Endothelial cell of umbilical vein (primary cell): ENCODE measurements at regions of chr17 and their contacts with region 1.

Region 1: GRCh38 chr17:59619293-59620063 is at the start of gene CLTC:
- DNase-seq: peak; percentile 97
- H3K4me3 ChIP-seq: peak within 1 kb of the TSS; percentile 88 to 94 (median 93)
- H3K27ac ChIP-seq: peak within 1 kb of the TSS; percentile 91
- H3K4me1 ChIP-seq: peaks cover 42% of the 10 kb centered on the region
- H3K27me3 ChIP-seq: no peaks in the 10 kb centered on the region
- CTCF ChIP-seq: no peak
- POLR2A ChIP-seq: peak; percentile 81
- total RNA-seq, gene CLTC: 317 and 326 TPM in 2 replicates

Region 2: DNA sequence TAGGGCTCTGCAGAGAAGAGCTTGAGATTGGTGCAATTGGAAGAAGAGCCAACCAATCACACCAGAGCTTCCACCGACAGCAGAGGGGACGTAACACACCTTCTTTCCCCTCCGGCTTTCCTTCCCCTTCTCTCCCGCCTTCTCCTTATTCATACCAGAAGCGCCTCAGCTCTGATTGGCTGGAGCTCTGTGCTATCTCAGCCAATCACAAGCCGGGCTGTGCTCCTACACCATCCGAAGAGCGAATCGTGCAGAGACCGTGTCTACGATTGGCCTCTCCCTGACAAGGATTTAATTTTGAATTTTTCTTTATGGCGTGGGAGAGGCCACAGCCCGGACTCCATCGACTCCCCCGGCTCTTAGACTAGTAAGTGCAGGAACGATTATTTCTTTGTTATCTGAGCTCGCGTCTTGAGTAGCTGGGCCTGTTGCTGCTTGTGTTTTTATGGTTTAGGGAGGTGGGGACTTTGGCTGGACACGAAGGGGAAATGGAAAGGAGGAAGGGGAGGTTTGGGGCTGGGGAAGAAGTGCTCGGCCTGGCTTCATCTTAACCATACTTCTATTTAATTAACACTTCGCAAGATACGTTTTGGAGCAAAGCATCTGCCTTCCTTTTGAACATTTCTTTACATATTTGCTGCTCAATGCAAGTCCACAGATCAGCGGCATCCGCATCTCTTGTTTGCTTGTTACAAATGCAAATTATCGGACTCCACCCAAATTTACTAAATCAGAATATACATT is 463.9 kb before region 1 on chr17 and contains the start of gene PRR11:
- CTCF ChIA-PET with region 1: no interaction called
- POLR2A ChIA-PET with region 1: interaction called, 3 read pairs
- dilution Hi-C with region 1: no loop called
- intact Hi-C with region 1: loop called (anchors 10 kb)
- DNase-seq: peak; percentile 100
- H3K4me3 ChIP-seq: peak within 1 kb of the TSS; percentile 67 to 97 (median 93)
- H3K27ac ChIP-seq: peak within 1 kb of the TSS; percentile 79
- H3K4me1 ChIP-seq: peaks cover 51% of the 10 kb centered on the region
- H3K27me3 ChIP-seq: no peaks in the 10 kb centered on the region
- CTCF ChIP-seq: no peak
- POLR2A ChIP-seq: no peak
- total RNA-seq, gene PRR11: 82.1 and 86.3 TPM in 2 replicates

Region 3: GRCh38 chr17:59311130-59311920 is 308.2 kb before region 1 on chr17:
- CTCF ChIA-PET with region 1: interaction called, 4 read pairs
- POLR2A ChIA-PET with region 1: no interaction called
- dilution Hi-C with region 1: no loop called
- intact Hi-C with region 1: loop called (anchors 5 kb)
- DNase-seq: peak; percentile 79
- H3K4me3 ChIP-seq: no peak overlapping the region
- H3K27ac ChIP-seq: no peak overlapping the region
- H3K4me1 ChIP-seq: no peaks in the 10 kb centered on the region
- H3K27me3 ChIP-seq: no peaks in the 10 kb centered on the region
- CTCF ChIP-seq: peak; percentile 64 to 67
- POLR2A ChIP-seq: no peak

Region 4: DNA sequence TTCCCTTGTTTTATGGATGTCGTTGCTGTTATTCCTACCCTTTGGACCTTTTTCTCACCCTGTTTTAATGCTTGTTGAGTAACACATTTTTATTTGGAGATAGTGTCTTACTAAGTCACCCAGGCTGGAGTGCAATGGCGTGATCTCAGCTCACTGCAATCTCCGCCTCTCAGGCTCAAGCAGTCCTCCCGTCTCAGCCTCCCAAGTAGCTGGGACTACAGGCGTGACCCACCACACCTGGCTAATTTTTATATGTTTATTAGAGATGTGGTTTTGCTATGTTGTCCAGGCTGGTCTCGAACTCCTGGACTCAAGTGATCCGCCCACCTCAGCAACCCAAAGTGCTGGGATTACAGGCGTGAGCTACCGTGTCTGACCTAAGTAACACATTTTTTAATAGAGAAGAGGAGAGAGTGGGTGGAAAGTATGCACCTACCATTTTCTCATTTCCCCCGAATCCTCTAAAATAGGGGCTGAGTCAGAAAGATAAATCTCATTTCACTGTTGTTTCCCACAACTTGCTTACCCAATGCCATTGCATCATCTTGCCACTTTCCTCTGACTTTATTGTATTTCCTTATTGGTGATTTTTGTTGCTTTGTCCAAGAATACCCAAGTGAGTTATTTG is 47.1 kb before region 1 on chr17:
- CTCF ChIA-PET with region 1: no interaction called
- POLR2A ChIA-PET with region 1: no interaction called
- dilution Hi-C with region 1: no loop called
- intact Hi-C with region 1: no loop called
- DNase-seq: no peak
- H3K4me3 ChIP-seq: no peak overlapping the region
- H3K27ac ChIP-seq: no peak overlapping the region
- H3K4me1 ChIP-seq: no peaks in the 10 kb centered on the region
- H3K27me3 ChIP-seq: no peaks in the 10 kb centered on the region
- CTCF ChIP-seq: no peak
- POLR2A ChIP-seq: no peak

Region 5: GRCh38 chr17:59634632-59635541 is 15.4 kb after region 1 on chr17:
- CTCF ChIA-PET with region 1: no interaction called
- POLR2A ChIA-PET with region 1: interaction called, 6 read pairs
- dilution Hi-C with region 1: no loop called
- intact Hi-C with region 1: loop called (anchors 2 kb)
- DNase-seq: peak; percentile 53
- H3K4me3 ChIP-seq: no peak overlapping the region
- H3K27ac ChIP-seq: no peak overlapping the region
- H3K4me1 ChIP-seq: peaks cover 18% of the 10 kb centered on the region
- H3K27me3 ChIP-seq: no peaks in the 10 kb centered on the region
- CTCF ChIP-seq: no peak
- POLR2A ChIP-seq: no peak

Region 6: GRCh38 chr17:59668816-59669215 is 49.3 kb after region 1 on chr17:
- CTCF ChIA-PET with region 1: interaction called, 3 read pairs
- POLR2A ChIA-PET with region 1: interaction called, 8 read pairs
- dilution Hi-C with region 1: no loop called
- intact Hi-C with region 1: loop called (anchors 1 kb)
- DNase-seq: peak; percentile 94
- H3K4me3 ChIP-seq: peak overlapping the region in 2 of 3 experiments; percentile 36 to 58
- H3K27ac ChIP-seq: peak overlapping the region; percentile 96
- H3K4me1 ChIP-seq: peaks cover 55% of the 10 kb centered on the region
- H3K27me3 ChIP-seq: no peaks in the 10 kb centered on the region
- CTCF ChIP-seq: no peak
- POLR2A ChIP-seq: no peak

Region 7: DNA sequence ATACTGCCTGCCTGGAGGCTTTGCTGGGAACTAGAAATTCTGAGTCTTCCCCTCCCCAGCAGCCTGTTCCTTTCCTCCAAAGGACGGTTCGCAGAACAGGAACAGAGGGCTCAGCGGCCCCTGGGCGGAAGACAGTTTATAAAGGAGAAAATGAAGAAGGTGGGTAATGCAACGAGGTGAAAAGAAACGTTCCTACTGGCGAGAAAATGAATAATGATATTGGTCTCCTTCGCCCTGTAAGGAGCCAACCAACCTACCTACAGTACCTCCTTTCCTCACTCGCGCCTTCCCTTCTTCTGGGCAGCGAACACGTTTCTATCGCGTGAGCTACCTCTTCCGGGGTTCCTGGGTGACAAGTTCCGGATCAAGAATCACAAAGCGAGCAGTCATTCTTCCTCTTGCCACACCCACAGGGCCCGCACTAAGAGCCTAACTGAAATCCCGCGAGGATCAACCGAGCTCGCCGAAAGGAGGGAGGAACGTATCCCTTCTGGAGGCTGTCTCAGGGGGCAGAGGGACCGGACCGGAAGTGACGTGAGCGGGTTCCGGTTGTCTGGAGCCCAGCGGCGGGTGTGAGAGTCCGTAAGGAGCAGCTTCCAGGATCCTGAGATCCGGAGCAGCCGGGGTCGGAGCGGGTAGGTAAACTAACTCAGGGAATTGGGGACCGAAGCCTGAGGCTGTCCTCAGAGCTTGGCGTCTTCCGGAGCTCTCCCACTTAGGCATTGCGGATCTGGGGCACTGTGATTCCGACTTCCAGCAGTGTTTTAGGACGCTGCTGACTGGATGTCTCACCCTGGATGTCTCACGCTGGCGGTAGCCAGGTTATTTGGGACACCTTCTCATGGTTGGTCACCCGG is 87.9 kb after region 1 on chr17 and contains the starts of genes PTRH2 and VMP1:
- CTCF ChIA-PET with region 1: no interaction called
- POLR2A ChIA-PET with region 1: interaction called, 4 read pairs
- dilution Hi-C with region 1: no loop called
- intact Hi-C with region 1: loop called (anchors 1 kb)
- DNase-seq: peak; percentile 100
- H3K4me3 ChIP-seq: peak within 1 kb of the TSS; percentile 59 to 90 (median 89)
- H3K27ac ChIP-seq: peak within 1 kb of the TSS; percentile 97
- H3K4me1 ChIP-seq: peaks cover 26% of the 10 kb centered on the region
- H3K27me3 ChIP-seq: no peaks in the 10 kb centered on the region
- CTCF ChIP-seq: no peak
- POLR2A ChIP-seq: peak; percentile 94
- total RNA-seq, gene PTRH2: 40.1 and 41.2 TPM in 2 replicates
- total RNA-seq, gene VMP1: 270 and 321 TPM in 2 replicates